Sigmoid colon (tissue), 7 donors: ENCODE measurements at regions of chrX and their contacts with region 1.

Region 1: DNA sequence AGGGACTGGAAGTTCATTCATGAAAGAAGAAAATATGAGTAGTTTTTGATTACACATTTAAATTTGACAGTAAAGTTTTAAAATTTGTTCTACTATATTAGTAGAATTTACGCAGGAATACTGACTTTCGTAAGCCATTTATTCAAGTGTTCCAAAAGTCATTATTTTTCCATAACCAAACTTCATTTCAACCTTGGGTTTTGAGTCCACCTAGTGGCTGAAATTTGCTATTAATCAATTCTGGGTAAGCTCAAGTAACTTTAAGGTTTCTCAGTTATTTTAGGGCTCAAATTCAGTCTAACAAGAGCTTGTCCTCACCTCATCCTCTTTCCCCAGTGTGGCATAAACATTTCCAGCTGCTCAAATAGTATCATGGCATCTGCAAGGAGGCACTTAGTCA is 175.4 kb downstream of the SH3BGRL start:
- DNase-seq: no peak
- H3K4me3 ChIP-seq: no peak overlapping the region
- H3K27ac ChIP-seq: no peak overlapping the region
- H3K4me1 ChIP-seq: no peaks in the 10 kb centered on the region
- H3K27me3 ChIP-seq: no peaks in the 10 kb centered on the region
- CTCF ChIP-seq: peak in 2 of 4 experiments; percentile 32 to 47
- EP300 ChIP-seq: no peak
- POLR2A ChIP-seq: no peak

Region 2: DNA sequence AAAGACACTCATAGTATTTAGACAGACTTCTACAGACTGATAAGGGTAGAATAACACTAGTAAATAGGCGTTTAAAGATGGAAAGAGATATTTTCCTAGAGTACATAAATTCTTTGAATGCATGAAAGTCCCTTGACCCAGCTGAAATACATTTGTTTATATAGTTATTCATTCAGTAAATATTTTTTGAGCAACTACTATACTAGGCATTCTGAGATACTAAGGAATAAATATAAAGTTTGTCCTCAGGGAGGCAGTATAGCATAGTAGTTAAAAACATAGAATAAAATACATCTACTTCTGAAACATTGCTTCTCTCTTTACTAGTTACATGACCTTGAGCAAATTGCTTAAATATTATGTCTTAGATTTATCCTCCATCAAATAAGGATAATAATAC is 203.0 kb before region 1 on chrX:
- intact Hi-C with region 1: loop called (anchors 5 kb)
- DNase-seq: no peak
- H3K4me3 ChIP-seq: no peak overlapping the region
- H3K27ac ChIP-seq: no peak overlapping the region
- H3K4me1 ChIP-seq: no peaks in the 10 kb centered on the region
- H3K27me3 ChIP-seq: no peaks in the 10 kb centered on the region
- CTCF ChIP-seq: no peak
- EP300 ChIP-seq: no peak
- POLR2A ChIP-seq: no peak

Region 3: DNA sequence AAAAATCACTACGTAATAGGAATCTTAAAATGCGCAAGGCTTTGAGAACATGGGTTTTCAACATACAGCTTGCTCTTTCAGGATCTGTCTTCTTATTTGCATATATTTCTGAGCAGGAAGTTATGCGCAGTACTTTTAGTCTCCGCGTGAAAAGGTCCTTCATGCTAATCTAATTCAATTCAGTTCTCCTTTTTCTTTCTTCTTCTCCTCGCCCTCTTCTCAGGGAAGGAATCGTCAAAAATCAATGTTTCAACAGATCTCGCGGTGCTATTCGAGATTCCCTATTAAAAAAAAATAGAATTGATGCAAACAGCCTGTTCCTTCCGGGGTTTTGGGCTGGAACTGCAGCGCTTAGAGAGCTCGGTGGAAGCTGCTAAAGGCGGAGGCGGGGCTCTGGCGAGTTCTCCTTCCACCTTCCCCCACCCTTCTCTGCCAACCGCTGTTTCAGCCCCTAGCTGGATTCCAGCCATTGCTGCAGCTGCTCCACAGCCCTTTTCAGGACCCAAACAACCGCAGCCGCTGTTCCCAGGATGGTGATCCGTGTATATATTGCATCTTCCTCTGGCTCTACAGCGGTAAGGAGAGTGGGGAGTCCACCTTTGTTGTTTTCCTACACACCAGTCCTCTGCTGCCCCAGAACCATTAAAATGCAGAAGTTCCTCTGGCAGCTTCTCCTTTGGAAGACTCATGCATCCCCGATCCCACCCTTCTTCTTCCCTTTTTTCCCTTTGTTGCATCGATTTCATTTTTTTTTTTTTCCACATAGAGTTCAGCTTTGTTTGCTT is 175.5 kb before region 1 on chrX and contains the starts of genes HMGN5 and SH3BGRL:
- intact Hi-C with region 1: loop called (anchors 10 kb)
- DNase-seq: peak; percentile 93
- H3K4me3 ChIP-seq: peak within 1 kb of the TSS; percentile 43 to 60 (median 54)
- H3K27ac ChIP-seq: peak within 1 kb of the TSS; percentile 80 to 84 (median 82)
- H3K4me1 ChIP-seq: peaks cover 0 to 14% (median 1%) of the 10 kb centered on the region in 4 donors
- H3K27me3 ChIP-seq: no peaks in the 10 kb centered on the region
- CTCF ChIP-seq: no peak
- EP300 ChIP-seq: peak in 1 of 4 donors; percentile 2
- POLR2A ChIP-seq: peak in 1 of 2 donors; percentile 28
- total RNA-seq, gene HMGN5: 5.3 to 23.5 (median 9.8) TPM
- total RNA-seq, gene SH3BGRL: 358 to 452 (median 373) TPM

Region 4: GRCh38 chrX:81564851-81565250 is 187.5 kb after region 1 on chrX:
- intact Hi-C with region 1: no loop called
- DNase-seq: no peak
- H3K4me3 ChIP-seq: no peak overlapping the region
- H3K27ac ChIP-seq: no peak overlapping the region
- H3K4me1 ChIP-seq: no peaks in the 10 kb centered on the region
- H3K27me3 ChIP-seq: no peaks in the 10 kb centered on the region
- CTCF ChIP-seq: no peak
- EP300 ChIP-seq: no peak
- POLR2A ChIP-seq: no peak